Psoas muscle (tissue), 8 donors: ENCODE measurements at regions of chr11 and their contacts with region 1.

Region 1: DNA sequence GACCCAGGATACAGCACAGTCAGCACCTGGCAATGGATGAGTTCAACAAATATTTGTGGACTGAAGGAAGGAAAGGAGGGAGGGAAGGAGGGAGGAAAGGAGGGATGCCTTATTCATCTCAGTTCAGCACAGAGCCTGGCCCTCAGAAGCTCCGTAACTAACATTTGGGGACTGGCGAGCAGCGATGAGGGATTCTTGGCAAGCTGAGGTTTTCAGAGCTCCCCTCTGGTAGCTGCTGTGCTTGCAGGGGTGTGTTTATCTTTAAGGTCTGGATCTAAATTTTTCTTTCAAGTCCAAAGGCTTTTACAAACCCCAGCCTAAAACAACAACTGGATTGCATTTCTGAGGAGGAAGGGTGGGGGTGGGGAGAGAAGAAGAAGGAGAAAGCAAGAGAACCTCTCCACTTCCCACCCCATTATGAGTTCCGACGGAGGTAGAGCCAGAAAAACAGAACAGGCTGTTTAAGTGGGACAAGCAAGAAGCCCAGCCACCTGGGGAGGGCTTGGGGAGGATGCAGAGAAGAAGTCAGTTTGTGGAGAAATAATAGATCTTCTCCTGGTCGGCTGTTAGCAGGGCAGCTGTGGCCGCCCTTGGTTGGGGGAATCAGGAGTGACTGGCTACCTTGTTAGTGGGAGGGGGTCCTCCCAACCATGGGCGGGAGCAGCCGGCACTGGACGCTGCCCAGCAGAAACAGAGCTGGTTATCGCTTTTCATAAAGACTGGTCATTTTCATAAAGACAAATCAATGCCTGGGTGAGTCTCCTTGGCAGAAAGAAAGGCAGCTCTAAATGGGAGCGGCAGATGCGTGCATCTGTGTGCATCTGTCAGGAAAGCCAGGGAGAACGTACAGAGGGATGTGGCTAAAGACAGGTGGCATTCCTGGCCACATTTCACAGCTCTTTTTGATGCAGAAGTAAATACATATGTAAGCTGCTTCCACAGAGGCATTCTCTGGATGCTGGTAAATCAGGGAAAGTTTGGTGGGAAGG is 78.0 kb downstream of the TSPAN18 start:
- DNase-seq: no peak
- ATAC-seq: no peak
- H3K4me3 ChIP-seq: no peak overlapping the region
- H3K27ac ChIP-seq: no peak overlapping the region
- H3K4me1 ChIP-seq: no peaks in the 10 kb centered on the region
- H3K27me3 ChIP-seq: peaks cover 0 to 39% (median 2%) of the 10 kb centered on the region in 3 donors
- CTCF ChIP-seq: no peak

Region 2: GRCh38 chr11:44861849-44862749 is 57.4 kb after region 1 on chr11:
- intact Hi-C with region 1: loop called in 1 of 2 experiments (anchors 10 kb)
- DNase-seq: peak; percentile 66 to 68
- ATAC-seq: peak; percentile 57 to 95 (median 94)
- H3K4me3 ChIP-seq: no peak overlapping the region
- H3K27ac ChIP-seq: peak overlapping the region; percentile 23
- H3K4me1 ChIP-seq: no peaks in the 10 kb centered on the region
- H3K27me3 ChIP-seq: no peaks in the 10 kb centered on the region
- CTCF ChIP-seq: no peak